IMR-90 (cell line): ENCODE measurements at regions of chr9 and their contacts with region 1.

Region 1: DNA sequence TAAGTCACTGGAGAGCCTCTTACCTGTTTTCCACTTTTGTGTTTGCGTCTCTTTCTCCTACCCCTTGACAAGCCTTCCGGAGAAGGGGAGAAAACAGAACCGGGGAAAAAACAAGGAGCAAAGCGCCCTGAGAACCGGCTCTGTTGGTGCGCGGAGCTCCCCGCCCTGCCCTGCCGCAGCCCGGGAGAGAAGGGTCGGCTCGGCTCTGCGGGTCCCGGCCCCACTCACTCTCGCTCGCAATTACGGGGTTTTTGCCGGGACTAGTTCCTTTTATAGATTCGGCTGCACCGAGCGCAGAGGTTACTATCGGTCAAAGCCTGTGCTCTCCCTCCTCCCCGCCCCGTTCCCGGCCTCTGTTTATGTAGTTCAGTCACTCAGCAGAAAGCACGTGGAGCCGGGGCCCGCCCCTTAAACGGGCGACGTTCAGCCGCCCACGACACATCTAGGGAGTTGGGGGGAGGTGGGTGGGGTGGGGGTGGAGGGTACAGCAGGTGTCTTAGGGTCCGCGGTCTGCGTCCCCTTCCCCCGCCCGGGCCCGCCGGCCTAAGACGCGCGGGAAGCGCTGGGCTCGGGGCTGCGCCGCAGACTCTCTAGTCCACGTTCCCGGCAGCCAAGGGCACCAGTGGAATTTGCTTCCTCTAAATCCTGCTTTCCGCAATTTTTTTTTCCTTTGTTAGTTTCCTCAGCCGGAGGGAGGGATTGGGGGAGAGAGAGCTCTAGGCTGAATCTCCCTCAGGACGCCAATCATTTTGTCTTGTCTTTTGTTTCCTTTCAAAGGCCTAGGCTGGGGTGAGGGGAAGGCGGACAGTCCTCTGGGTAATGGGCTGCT is at the start of gene ABCA1:
- DNase-seq: peak; percentile 83
- ATAC-seq: peak; percentile 75
- H3K4me3 ChIP-seq: peak within 1 kb of the TSS; percentile 99
- H3K27ac ChIP-seq: peak within 1 kb of the TSS; percentile 94
- H3K4me1 ChIP-seq: peaks cover 9% of the 10 kb centered on the region
- H3K27me3 ChIP-seq: no peaks in the 10 kb centered on the region
- CTCF ChIP-seq: no peak
- POLR2A ChIP-seq: peak; percentile 89
- RAD21 ChIP-seq: no peak
- total RNA-seq, gene ABCA1: 43.6 and 52.2 TPM in 2 replicates

Region 2: DNA sequence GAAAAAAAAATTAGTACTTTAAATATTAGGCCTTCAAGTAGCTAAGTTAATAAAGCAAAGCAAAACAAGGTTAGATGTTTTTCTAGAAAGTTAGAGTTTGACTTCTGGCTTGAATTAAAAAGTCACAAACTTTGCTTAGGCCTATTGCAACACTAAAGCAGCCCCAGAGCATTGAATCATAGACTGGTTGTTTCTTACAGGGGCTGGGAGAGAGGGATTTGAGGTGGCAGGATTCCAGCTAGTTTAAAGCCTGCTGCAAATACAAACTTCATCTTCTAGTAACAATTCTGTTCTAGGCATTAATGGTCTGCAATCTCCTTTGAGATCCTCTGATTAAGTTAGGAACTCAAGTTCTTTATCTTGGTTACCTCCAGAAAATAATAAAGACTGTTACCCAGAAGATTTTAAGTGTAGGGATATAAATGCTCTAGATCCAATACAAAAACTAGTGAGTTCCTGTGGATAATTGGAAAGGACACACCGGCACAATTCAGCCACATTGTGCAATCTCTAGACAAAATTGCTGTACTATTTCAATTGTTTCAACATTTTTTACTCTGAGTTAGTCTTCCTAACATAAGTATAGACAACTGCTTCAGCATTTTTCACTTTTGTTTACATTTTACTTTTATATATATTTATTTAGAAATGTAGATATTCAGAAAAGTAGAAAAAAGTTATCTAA is 341.5 kb before region 1 on chr9:
- CTCF ChIA-PET with region 1: no interaction called
- POLR2A ChIA-PET with region 1: no interaction called
- dilution Hi-C with region 1: no loop called
- in situ Hi-C with region 1: no loop called
- intact Hi-C with region 1: no loop called
- DNase-seq: no peak
- ATAC-seq: no peak
- H3K4me3 ChIP-seq: no peak overlapping the region
- H3K27ac ChIP-seq: no peak overlapping the region
- H3K4me1 ChIP-seq: no peaks in the 10 kb centered on the region
- H3K27me3 ChIP-seq: no peaks in the 10 kb centered on the region
- CTCF ChIP-seq: no peak
- POLR2A ChIP-seq: no peak
- RAD21 ChIP-seq: no peak

Region 3: GRCh38 chr9:104863180-104863883 is 64.8 kb before region 1 on chr9:
- CTCF ChIA-PET with region 1: interaction called, 19 read pairs
- POLR2A ChIA-PET with region 1: interaction called, 3 read pairs
- dilution Hi-C with region 1: no loop called
- in situ Hi-C with region 1: loop called (anchors 5 kb)
- intact Hi-C with region 1: loop called (anchors 1 kb)
- DNase-seq: peak; percentile 93
- ATAC-seq: peak; percentile 59
- H3K4me3 ChIP-seq: no peak overlapping the region
- H3K27ac ChIP-seq: peak overlapping the region; percentile 56; the same call in 1 of the 2 replicates
- H3K4me1 ChIP-seq: peaks cover 41% of the 10 kb centered on the region
- H3K27me3 ChIP-seq: no peaks in the 10 kb centered on the region
- CTCF ChIP-seq: peak; percentile 88
- POLR2A ChIP-seq: no peak
- RAD21 ChIP-seq: peak; percentile 86

Region 4: DNA sequence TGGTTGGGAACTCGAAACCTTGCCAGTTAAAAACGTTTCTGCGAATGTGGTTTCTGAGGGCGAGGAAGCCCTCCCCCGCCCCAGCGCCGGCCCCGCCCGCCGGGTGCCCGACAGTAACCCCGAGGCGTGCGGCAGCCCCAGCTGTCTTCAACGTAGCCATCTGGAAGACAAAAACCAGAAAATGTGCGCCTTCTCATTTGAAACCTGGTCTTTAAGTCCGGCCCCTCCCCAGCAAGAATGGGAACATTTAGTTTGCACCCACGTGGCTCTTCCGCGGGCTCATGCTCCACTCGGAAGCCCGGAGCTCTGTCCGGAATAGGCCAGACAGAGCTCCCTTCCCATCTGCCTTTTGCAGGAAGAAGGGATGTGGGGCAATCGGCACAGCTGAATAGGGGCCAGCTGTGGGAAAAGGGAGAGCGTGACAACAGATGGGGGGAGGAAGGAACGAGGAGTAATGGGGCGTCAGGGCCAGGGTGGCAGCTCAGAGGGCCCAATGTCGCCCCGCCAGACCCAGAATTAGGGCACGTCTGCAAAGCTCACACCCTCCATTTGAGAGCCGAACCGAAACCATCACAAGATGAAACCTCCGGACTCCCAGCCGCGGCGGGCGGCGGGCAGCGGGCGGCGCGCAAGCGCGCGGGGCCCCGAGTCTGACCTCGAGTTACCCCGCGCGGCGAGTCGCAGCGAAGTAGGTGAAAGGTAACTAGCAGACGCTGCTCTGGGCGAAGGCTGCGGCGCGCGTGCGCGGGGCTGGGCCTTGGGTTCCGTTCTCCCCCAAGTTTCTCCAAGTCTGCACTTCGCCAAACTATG is 63.2 kb after region 1 on chr9:
- CTCF ChIA-PET with region 1: interaction called, 4 read pairs
- POLR2A ChIA-PET with region 1: interaction called, 4 read pairs
- dilution Hi-C with region 1: no loop called
- in situ Hi-C with region 1: no loop called
- intact Hi-C with region 1: loop called (anchors 1 kb)
- DNase-seq: peak; percentile 82
- ATAC-seq: peak; percentile 85
- H3K4me3 ChIP-seq: peak overlapping the region; percentile 65
- H3K27ac ChIP-seq: peak overlapping the region; percentile 98
- H3K4me1 ChIP-seq: peaks cover 25% of the 10 kb centered on the region
- H3K27me3 ChIP-seq: no peaks in the 10 kb centered on the region
- CTCF ChIP-seq: no peak
- POLR2A ChIP-seq: peak; percentile 37; the same call in 1 of the 2 replicates
- RAD21 ChIP-seq: peak; percentile 27

Region 5: DNA sequence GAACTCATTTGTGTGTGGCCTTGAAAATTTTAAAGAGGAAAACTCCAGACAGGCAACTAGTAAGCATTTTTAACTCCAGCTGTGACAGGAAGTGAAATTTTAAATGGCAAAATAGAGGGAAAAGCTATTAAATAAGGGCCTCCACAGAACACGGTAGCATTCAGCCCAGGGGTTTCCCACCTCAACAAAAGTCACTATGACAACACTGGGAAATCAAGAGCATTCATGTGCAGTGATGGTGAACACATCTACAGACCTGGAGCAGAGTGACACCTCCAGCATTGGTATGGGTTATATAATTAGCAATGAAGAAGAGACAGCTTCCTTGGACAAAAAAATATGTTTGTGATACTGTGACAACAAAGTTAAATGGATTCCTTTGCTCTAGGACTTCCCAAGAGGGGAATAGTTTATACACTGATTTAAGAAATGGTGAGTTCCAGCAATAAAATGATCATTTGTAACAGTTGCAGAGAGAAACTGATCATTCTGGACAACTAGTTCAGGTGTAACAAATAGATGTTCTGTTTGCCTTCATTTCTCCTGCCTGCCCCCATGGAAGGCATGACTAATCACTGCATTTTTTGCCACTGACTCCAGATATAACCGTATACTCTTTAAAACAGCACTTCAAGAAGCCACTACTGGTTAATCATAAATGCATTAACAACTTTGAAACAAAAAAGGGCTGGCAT is 223.0 kb after region 1 on chr9:
- CTCF ChIA-PET with region 1: interaction called, 3 read pairs
- POLR2A ChIA-PET with region 1: interaction called, 3 read pairs
- dilution Hi-C with region 1: no loop called
- in situ Hi-C with region 1: loop called (anchors 5 kb)
- intact Hi-C with region 1: no loop called
- DNase-seq: peak; percentile 69
- ATAC-seq: peak; percentile 76
- H3K4me3 ChIP-seq: no peak overlapping the region
- H3K27ac ChIP-seq: no peak overlapping the region
- H3K4me1 ChIP-seq: peaks cover 14% of the 10 kb centered on the region
- H3K27me3 ChIP-seq: no peaks in the 10 kb centered on the region
- CTCF ChIP-seq: no peak
- POLR2A ChIP-seq: no peak
- RAD21 ChIP-seq: no peak

Region 6: GRCh38 chr9:105244003-105244733 is 316.0 kb after region 1 on chr9 and contains the start of gene SLC44A1:
- CTCF ChIA-PET with region 1: interaction called, 4 read pairs
- POLR2A ChIA-PET with region 1: no interaction called
- dilution Hi-C with region 1: no loop called
- in situ Hi-C with region 1: no loop called
- intact Hi-C with region 1: loop called (anchors 1 kb)
- DNase-seq: peak; percentile 92
- ATAC-seq: peak; percentile 98
- H3K4me3 ChIP-seq: peak within 1 kb of the TSS; percentile 63
- H3K27ac ChIP-seq: peak within 1 kb of the TSS; percentile 24
- H3K4me1 ChIP-seq: no peaks in the 10 kb centered on the region; the same call in 1 of the 2 replicates
- H3K27me3 ChIP-seq: no peaks in the 10 kb centered on the region
- CTCF ChIP-seq: no peak
- POLR2A ChIP-seq: no peak
- RAD21 ChIP-seq: peak; percentile 28; the same call in 1 of the 2 replicates
- total RNA-seq, gene SLC44A1: 19.4 and 21.7 TPM in 2 replicates